ENCODE measurements at regions of chr7 and their contacts with region 1.

Region 1: DNA sequence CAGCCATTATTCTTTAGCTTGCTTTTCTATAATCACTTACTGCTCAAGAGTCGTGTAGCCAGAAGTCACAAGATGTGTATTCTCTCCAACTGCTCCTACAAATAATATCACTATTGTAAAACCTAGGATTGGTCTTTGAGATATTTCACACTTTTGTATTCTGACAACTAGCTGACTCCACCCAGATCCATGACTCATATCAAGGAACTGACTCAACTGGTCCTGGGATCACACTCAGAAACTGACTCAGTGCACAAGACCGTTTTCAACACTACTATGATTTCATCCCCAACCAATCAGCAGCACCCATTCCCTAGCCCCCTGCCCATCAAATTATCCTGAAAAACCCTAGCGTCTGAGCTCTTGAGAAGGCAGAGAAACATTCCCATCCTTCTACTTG is 56.5 kb upstream of the ORC5 start:
- DNase-seq: no peak
- H3K4me3 ChIP-seq: no peak overlapping the region
- H3K27ac ChIP-seq: no peak overlapping the region
- H3K4me1 ChIP-seq: no peaks in the 10 kb centered on the region
- H3K27me3 ChIP-seq: no peaks in the 10 kb centered on the region
- CTCF ChIP-seq: no peak
- EP300 ChIP-seq: no peak
- POLR2A ChIP-seq: no peak

Region 2: DNA sequence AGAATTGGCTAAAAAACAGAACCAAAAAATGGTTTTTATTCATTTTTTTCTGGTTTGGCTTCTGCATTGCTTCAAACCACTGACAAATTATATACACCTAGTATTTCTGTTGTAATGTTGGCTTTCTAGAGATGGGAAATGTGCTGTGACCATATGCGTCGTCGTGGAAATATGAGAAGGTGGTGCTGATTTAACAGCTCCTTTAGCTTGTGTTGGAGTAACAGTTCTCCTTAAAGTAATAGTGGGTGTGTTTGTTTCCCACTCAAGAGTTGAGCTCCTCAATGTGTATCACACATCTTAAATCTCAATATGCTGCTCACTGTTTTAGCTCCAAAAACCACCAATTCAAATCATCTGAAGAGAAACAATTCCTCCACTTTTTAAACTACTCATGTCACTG is 260.6 kb after region 1 on chr7:
- in situ Hi-C with region 1: no loop called
- intact Hi-C with region 1: no loop called
- DNase-seq: no peak
- H3K4me3 ChIP-seq: no peak overlapping the region
- H3K27ac ChIP-seq: no peak overlapping the region
- H3K4me1 ChIP-seq: peaks cover 0 to 5% (median 0%) of the 10 kb centered on the region in 4 donors
- H3K27me3 ChIP-seq: no peaks in the 10 kb centered on the region
- CTCF ChIP-seq: no peak
- EP300 ChIP-seq: no peak
- POLR2A ChIP-seq: no peak

Region 3: GRCh38 chr7:104603957-104604356 is 339.7 kb after region 1 on chr7:
- in situ Hi-C with region 1: no loop called
- intact Hi-C with region 1: loop called (anchors 5 kb)
- DNase-seq: no peak
- H3K4me3 ChIP-seq: no peak overlapping the region
- H3K27ac ChIP-seq: no peak overlapping the region
- H3K4me1 ChIP-seq: no peaks in the 10 kb centered on the region
- H3K27me3 ChIP-seq: no peaks in the 10 kb centered on the region
- CTCF ChIP-seq: no peak
- EP300 ChIP-seq: no peak
- POLR2A ChIP-seq: no peak